Activated B cell treated with CpG ODN at 0.5 μM for 24 hours (primary cell): ENCODE measurements at regions of chr2 and their contacts with region 1.

Region 1: DNA sequence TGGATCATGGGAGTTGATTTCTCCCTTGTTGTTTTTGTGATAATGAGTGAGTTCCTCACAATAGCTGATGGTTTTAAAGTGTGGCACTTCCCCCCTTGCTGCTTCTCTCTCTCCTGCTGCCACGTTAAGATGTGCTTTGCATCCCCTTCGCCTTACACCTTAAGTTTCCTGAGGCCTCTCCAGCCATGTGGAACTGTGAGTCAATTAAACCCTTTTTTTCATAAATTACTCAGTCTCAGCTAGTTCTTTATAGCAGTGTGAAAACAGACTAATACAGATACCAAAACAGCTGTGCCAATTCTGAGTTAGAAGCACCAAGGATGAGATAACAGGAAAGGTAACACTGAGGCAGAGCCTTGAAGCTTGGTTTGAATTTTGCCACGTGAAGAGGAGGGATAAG is 44.7 kb downstream of the ITSN2 start:
- DNase-seq: no peak
- ATAC-seq: peak; percentile 87
- H3K4me3 Mint-ChIP-seq: peak overlapping the region; percentile 50
- H3K27ac Mint-ChIP-seq: peak overlapping the region; percentile 80
- H3K4me1 Mint-ChIP-seq: peaks cover 51% of the 10 kb centered on the region
- H3K27me3 Mint-ChIP-seq: no peaks in the 10 kb centered on the region
- CTCF ChIP-seq: no peak

Region 2: GRCh38 chr2:24046930-24047702 is 268.6 kb before region 1 on chr2 and contains the start of gene WDCP:
- CTCF ChIA-PET with region 1: no interaction called
- POLR2A ChIA-PET with region 1: no interaction called
- intact Hi-C with region 1: no loop called
- DNase-seq: peak; percentile 79
- ATAC-seq: peak; percentile 98
- H3K4me3 Mint-ChIP-seq: peak within 1 kb of the TSS; percentile 96
- H3K27ac Mint-ChIP-seq: peak within 1 kb of the TSS; percentile 89
- H3K4me1 Mint-ChIP-seq: peaks cover 29% of the 10 kb centered on the region
- H3K27me3 Mint-ChIP-seq: no peaks in the 10 kb centered on the region
- CTCF ChIP-seq: no peak
- total RNA-seq, gene WDCP: 20.0 and 20.6 TPM in 2 replicates

Region 3: GRCh38 chr2:24342110-24342910 is 26.6 kb after region 1 on chr2:
- CTCF ChIA-PET with region 1: interaction called, 4 read pairs
- POLR2A ChIA-PET with region 1: interaction called, 11 read pairs
- intact Hi-C with region 1: loop called (anchors 1 kb)
- DNase-seq: no peak
- ATAC-seq: peak; percentile 64
- H3K4me3 Mint-ChIP-seq: peak overlapping the region; percentile 64
- H3K27ac Mint-ChIP-seq: peak overlapping the region; percentile 89
- H3K4me1 Mint-ChIP-seq: peaks cover 93% of the 10 kb centered on the region
- H3K27me3 Mint-ChIP-seq: no peaks in the 10 kb centered on the region
- CTCF ChIP-seq: no peak